Heart left ventricle (tissue), 16 donors: ENCODE measurements at regions of chr15 and their contacts with region 1.

Region 1: GRCh38 chr15:60507596-60508424 is 28.9 kb upstream of the ICE2 start:
- DNase-seq: peak in 2 of 5 donors; percentile 32 to 41
- ATAC-seq: peak; percentile 61 to 75 (median 74)
- H3K4me3 ChIP-seq: no peak overlapping the region
- H3K27ac ChIP-seq: no peak overlapping the region
- H3K4me1 ChIP-seq: peaks cover 0 to 35% (median 22%) of the 10 kb centered on the region in 12 donors
- H3K27me3 ChIP-seq: no peaks in the 10 kb centered on the region
- CTCF ChIP-seq: peak; percentile 89 to 96 (median 93)
- POLR2A ChIP-seq: no peak

Region 2: DNA sequence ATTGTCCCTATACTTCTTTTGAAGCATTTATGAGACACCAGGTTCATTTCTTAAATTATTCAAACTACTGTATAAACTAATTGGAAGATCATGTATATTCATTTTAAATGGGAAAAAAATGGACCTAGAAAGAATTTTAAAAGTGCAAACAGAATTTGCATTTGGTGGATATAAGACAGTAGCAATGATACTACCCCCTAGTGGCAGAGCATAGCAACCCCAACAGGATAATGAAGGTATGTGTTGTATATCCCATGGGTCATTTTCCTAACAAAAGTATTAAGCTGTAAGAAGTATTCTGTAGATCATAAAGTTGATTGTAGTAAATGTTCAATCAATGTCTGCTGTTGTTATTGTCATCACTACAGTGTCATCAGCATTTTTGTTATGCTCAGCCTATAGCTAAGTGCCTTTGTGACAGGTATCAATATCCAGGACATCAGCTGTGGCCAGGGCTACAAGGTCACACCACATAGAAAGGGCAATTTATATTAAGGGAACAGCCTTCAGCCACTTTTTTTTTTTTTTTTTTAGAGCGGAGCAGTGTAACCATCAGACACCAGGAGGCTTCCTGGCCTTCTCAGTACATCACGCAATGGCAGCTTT is 327.9 kb before region 1 on chr15:
- intact Hi-C with region 1: no loop called
- DNase-seq: no peak
- ATAC-seq: no peak
- H3K4me3 ChIP-seq: no peak overlapping the region
- H3K27ac ChIP-seq: no peak overlapping the region
- H3K4me1 ChIP-seq: no peaks in the 10 kb centered on the region
- H3K27me3 ChIP-seq: peaks cover 0 to 16% (median 0%) of the 10 kb centered on the region in 9 donors
- CTCF ChIP-seq: peak; percentile 52 to 87 (median 68)
- POLR2A ChIP-seq: no peak

Region 3: GRCh38 chr15:60458721-60459120 is 49.1 kb before region 1 on chr15:
- intact Hi-C with region 1: loop called in 1 of 10 experiments (anchors 10 kb)
- DNase-seq: no peak
- ATAC-seq: no peak
- H3K4me3 ChIP-seq: no peak overlapping the region
- H3K27ac ChIP-seq: peak overlapping the region in 1 of 12 donors; percentile 13
- H3K4me1 ChIP-seq: peaks cover 0 to 6% (median 0%) of the 10 kb centered on the region in 12 donors
- H3K27me3 ChIP-seq: no peaks in the 10 kb centered on the region
- CTCF ChIP-seq: no peak
- POLR2A ChIP-seq: no peak

Region 4: GRCh38 chr15:60916679-60917460 is 409.1 kb after region 1 on chr15:
- intact Hi-C with region 1: loop called in 9 of 10 experiments (anchors 5 to 10 kb)
- DNase-seq: peak; percentile 84 to 91 (median 86)
- ATAC-seq: peak; percentile 83 to 91 (median 86)
- H3K4me3 ChIP-seq: peak overlapping the region in 6 of 12 donors; percentile 1 to 30 (median 10)
- H3K27ac ChIP-seq: peak overlapping the region; percentile 10 to 82 (median 53)
- H3K4me1 ChIP-seq: peaks cover 0 to 39% (median 20%) of the 10 kb centered on the region in 12 donors
- H3K27me3 ChIP-seq: no peaks in the 10 kb centered on the region
- CTCF ChIP-seq: peak; percentile 73 to 91 (median 86)
- POLR2A ChIP-seq: no peak

Region 5: DNA sequence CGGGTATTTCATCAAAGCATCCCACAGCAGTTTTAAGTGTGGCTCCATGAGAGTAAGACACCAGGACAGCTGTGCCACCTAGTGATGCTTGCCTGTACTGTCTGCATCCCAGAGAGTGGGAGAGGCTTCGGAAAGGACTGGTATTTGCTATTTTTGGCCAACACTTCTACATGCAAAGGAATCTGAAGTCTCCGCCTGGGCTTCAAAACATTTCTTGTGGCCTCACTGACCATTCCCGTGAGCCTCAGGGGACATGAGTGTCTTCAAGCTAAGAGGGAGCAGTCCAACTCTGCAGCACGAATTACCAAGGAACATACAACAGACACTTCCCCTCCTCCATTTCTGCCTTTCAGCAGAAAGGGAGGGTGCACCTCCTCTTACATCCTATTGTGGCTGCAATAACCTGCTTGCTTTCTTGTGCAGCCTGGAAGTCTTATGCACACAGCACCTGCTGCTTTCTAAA is 543.8 kb after region 1 on chr15:
- intact Hi-C with region 1: loop called in 3 of 10 experiments (anchors 5 to 10 kb)
- DNase-seq: peak in 4 of 5 donors; percentile 37 to 44 (median 43)
- ATAC-seq: peak; percentile 79 to 92 (median 91)
- H3K4me3 ChIP-seq: no peak overlapping the region
- H3K27ac ChIP-seq: no peak overlapping the region
- H3K4me1 ChIP-seq: peaks cover 0 to 12% (median 4%) of the 10 kb centered on the region in 12 donors
- H3K27me3 ChIP-seq: no peaks in the 10 kb centered on the region
- CTCF ChIP-seq: peak; percentile 31 to 76 (median 64)
- POLR2A ChIP-seq: no peak

Region 6: GRCh38 chr15:61834076-61834697 is 1326.4 kb after region 1 on chr15:
- intact Hi-C with region 1: loop called in 8 of 10 experiments (anchors 2 to 10 kb)
- DNase-seq: peak; percentile 72 to 88 (median 79)
- ATAC-seq: peak in 3 of 4 donors; percentile 75 to 84 (median 80)
- H3K4me3 ChIP-seq: no peak overlapping the region
- H3K27ac ChIP-seq: no peak overlapping the region
- H3K4me1 ChIP-seq: peaks cover 0 to 9% (median 3%) of the 10 kb centered on the region in 12 donors
- H3K27me3 ChIP-seq: no peaks in the 10 kb centered on the region
- CTCF ChIP-seq: peak in 11 of 12 donors; percentile 91 to 98 (median 96)
- POLR2A ChIP-seq: no peak